ENCODE measurements at regions of chr5 and their contacts with region 1.

Region 1: DNA sequence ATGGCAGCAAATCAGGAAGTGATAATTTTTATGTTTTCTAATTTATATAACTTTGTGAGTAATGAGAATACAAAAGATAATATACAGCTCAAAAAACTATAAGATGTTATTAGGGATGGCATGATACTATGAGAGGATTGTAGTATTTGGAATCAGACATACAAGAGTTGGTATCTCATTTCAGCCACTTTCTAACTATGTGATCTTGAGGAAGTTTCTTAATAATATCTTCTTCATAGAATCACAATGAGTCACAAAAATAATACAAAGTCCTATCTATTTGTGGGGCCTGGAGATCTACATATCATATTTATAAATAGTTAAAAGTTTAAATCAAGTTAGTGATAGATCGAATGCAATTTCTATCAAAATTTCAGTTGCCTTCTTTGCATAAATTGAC is 23.7 kb upstream of the TMED7 start:
- DNase-seq: no peak
- ATAC-seq: no peak
- H3K4me3 ChIP-seq: no peak overlapping the region
- H3K27ac ChIP-seq: no peak overlapping the region
- H3K4me1 ChIP-seq: no peaks in the 10 kb centered on the region
- H3K27me3 ChIP-seq: peaks cover 0 to 10% (median 0%) of the 10 kb centered on the region in 7 donors
- CTCF ChIP-seq: no peak

Region 2: DNA sequence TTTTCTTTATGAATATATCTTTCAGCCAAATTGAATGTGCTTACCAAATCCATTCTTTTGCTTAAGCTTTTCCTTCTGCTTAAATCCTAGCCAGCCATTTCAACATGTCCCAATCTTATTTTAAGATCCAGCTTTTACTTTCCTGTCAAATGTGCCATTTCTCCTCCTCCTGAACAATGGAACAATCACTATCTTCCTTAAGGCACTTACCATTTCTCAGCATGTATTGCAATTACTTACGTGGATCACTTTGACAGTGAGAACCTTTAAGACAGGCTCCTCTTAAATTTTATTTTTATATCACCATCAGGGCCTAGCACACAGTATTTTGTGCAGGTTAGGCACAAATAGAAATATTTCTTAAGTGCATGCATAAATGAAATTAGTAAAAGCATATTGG is 171.3 kb after region 1 on chr5:
- intact Hi-C with region 1: loop called in 1 of 10 experiments (anchors 5 kb)
- DNase-seq: no peak
- ATAC-seq: no peak
- H3K4me3 ChIP-seq: no peak overlapping the region
- H3K27ac ChIP-seq: no peak overlapping the region
- H3K4me1 ChIP-seq: peaks cover 0 to 10% (median 4%) of the 10 kb centered on the region in 9 donors
- H3K27me3 ChIP-seq: peaks cover 0 to 35% (median 11%) of the 10 kb centered on the region in 7 donors
- CTCF ChIP-seq: no peak

Region 3: DNA sequence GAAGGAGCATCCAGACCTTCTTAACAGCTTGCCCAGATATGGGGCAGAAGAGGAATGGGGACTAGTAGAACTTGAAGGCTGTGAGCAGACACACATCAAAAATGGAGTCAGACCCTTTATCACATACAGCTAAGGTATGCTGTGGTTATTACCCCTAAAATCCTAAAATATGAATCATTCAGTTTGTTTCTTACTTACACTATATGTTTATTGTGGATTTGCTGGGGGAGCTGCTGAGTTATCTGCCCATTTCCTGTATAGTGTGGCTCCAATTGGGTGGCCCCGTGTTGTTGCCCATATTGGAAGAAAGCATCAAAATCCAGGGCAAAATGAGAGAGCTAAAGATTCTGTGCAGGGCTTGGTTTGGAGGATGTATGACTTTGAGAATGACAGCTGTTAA is 249.1 kb after region 1 on chr5:
- intact Hi-C with region 1: no loop called
- DNase-seq: no peak
- ATAC-seq: no peak
- H3K4me3 ChIP-seq: no peak overlapping the region
- H3K27ac ChIP-seq: no peak overlapping the region
- H3K4me1 ChIP-seq: no peaks in the 10 kb centered on the region
- H3K27me3 ChIP-seq: no peaks in the 10 kb centered on the region
- CTCF ChIP-seq: no peak

Region 4: DNA sequence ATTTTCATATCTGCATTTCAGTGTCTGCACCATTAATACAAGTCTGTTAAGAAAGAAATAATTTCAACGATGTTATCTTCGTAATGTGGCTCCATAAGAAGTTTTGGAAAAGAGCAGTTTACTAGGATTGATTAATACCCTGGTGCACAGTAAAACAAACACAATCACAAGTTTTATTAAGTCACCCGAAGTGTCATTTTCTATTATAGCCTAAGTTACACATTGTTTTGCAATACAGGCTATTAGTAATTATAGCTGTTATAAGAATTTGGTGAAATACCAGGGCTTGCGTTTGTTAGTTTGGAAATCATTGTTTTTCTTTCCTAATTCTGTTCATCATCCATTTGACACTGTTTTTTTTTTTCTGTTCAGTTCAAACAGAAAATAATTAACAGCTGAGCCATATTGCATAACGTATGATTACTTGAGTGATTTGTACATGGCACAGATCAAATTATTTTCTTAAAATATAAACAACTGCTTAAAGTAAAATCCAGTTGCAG is 343.4 kb after region 1 on chr5:
- intact Hi-C with region 1: no loop called
- DNase-seq: no peak
- ATAC-seq: no peak
- H3K4me3 ChIP-seq: no peak overlapping the region
- H3K27ac ChIP-seq: no peak overlapping the region
- H3K4me1 ChIP-seq: no peaks in the 10 kb centered on the region
- H3K27me3 ChIP-seq: no peaks in the 10 kb centered on the region
- CTCF ChIP-seq: no peak

Measured in heart right ventricle (tissue), 16 donors.